Spleen (tissue), 13 donors: ENCODE measurements at regions of chr19 and their contacts with region 1.

Region 1: DNA sequence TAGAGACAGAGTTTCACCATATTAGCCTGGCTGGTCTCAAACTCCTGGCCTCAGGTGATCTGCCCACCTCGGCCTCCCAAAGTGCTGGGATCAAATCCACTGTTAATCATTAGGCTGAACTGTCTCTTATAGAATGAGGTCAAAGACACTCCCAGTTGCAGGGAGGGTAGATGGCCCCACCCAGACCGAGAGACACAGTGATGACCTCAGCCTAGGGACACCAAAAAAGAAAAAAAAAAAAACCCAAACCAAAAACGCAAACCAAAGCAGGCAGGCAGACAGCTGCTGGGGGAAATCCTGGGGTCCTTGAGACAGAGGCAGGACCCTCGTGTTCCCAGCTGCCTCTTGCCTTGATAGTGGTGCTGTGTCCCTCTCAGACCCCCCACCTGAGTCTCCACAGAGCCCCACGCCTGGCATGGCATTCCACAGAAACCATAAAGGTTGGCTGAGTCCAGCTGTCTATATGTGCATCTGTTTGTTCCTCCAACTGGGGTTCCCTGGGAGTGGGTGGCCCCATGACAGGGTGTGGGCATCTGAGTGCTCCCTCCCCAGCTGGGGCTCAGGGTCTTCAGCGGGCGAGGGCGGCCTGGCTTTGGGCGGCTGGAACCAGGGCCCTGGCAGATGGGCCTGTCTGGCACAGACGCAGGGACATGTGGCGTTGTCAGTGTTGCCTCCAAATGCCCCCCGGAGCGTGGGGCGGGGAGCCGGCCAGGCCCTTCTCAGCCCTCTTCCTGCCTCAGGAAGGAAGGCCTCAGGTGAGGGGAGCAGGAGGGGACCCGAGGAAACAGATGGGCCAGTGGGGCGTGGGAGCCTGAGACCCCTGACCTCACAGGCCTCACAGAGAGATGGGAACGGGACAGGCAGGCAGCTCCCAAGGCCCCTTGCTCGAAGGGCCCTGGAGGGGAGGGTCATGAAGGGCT is 5.2 kb downstream of the DAND5 start:
- DNase-seq: no peak
- H3K4me3 ChIP-seq: no peak overlapping the region
- H3K27ac ChIP-seq: no peak overlapping the region
- H3K4me1 ChIP-seq: peaks cover 0 to 7% (median 4%) of the 10 kb centered on the region in 6 donors
- H3K27me3 ChIP-seq: peaks cover 0 to 23% (median 8%) of the 10 kb centered on the region in 7 donors
- CTCF ChIP-seq: no peak
- POLR2A ChIP-seq: no peak

Region 2: GRCh38 chr19:12872941-12873890 is 101.3 kb before region 1 on chr19:
- intact Hi-C with region 1: no loop called
- DNase-seq: no peak
- H3K4me3 ChIP-seq: peak overlapping the region in 3 of 8 donors; percentile 24 to 40 (median 34)
- H3K27ac ChIP-seq: no peak overlapping the region
- H3K4me1 ChIP-seq: peaks cover 0 to 9% (median under 1%) of the 10 kb centered on the region in 6 donors
- H3K27me3 ChIP-seq: no peaks in the 10 kb centered on the region
- CTCF ChIP-seq: no peak
- POLR2A ChIP-seq: no peak

Region 3: GRCh38 chr19:12913011-12913561 is 61.5 kb before region 1 on chr19:
- intact Hi-C with region 1: no loop called
- DNase-seq: no peak
- H3K4me3 ChIP-seq: peak overlapping the region in 1 of 8 donors; percentile 38
- H3K27ac ChIP-seq: peak overlapping the region; percentile 42 to 86 (median 73)
- H3K4me1 ChIP-seq: peaks cover 5 to 31% (median 24%) of the 10 kb centered on the region in 6 donors
- H3K27me3 ChIP-seq: no peaks in the 10 kb centered on the region
- CTCF ChIP-seq: no peak
- POLR2A ChIP-seq: no peak

Region 4: GRCh38 chr19:12938234-12939025 is 36.1 kb before region 1 on chr19 and contains the start of gene CALR:
- intact Hi-C with region 1: no loop called
- DNase-seq: peak; percentile 99
- H3K4me3 ChIP-seq: peak within 1 kb of the TSS; percentile 56 to 100 (median 98)
- H3K27ac ChIP-seq: peak within 1 kb of the TSS; percentile 89 to 98 (median 95)
- H3K4me1 ChIP-seq: peaks cover 35 to 77% (median 68%) of the 10 kb centered on the region in 6 donors
- H3K27me3 ChIP-seq: no peaks in the 10 kb centered on the region
- CTCF ChIP-seq: peak in 5 of 11 experiments; percentile 15 to 52 (median 32)
- POLR2A ChIP-seq: peak; percentile 92 to 99 (median 97)
- total RNA-seq, gene CALR: 306 to 828 (median 571) TPM

Region 5: GRCh38 chr19:13060964-13061927 is 86.7 kb after region 1 on chr19:
- intact Hi-C with region 1: loop called (anchors 5 kb)
- DNase-seq: peak; percentile 95
- H3K4me3 ChIP-seq: peak overlapping the region; percentile 18 to 73 (median 44)
- H3K27ac ChIP-seq: peak overlapping the region in 4 of 8 donors; percentile 30 to 52 (median 42)
- H3K4me1 ChIP-seq: peaks cover 8 to 49% (median 24%) of the 10 kb centered on the region in 6 donors
- H3K27me3 ChIP-seq: peaks cover 0 to 27% (median 0%) of the 10 kb centered on the region in 7 donors
- CTCF ChIP-seq: peak; percentile 90 to 99 (median 97)
- POLR2A ChIP-seq: no peak

Region 6: GRCh38 chr19:13262450-13262849 is 287.9 kb after region 1 on chr19:
- intact Hi-C with region 1: loop called (anchors 5 kb)
- DNase-seq: no peak
- H3K4me3 ChIP-seq: no peak overlapping the region
- H3K27ac ChIP-seq: no peak overlapping the region
- H3K4me1 ChIP-seq: peaks cover 0 to 8% (median 0%) of the 10 kb centered on the region in 6 donors
- H3K27me3 ChIP-seq: peaks cover 0 to 17% (median 0%) of the 10 kb centered on the region in 7 donors
- CTCF ChIP-seq: peak; percentile 16 to 71 (median 60)
- POLR2A ChIP-seq: no peak

Region 7: GRCh38 chr19:13588957-13589833 is 614.6 kb after region 1 on chr19:
- intact Hi-C with region 1: loop called (anchors 10 kb)
- DNase-seq: peak; percentile 94
- H3K4me3 ChIP-seq: no peak overlapping the region
- H3K27ac ChIP-seq: no peak overlapping the region
- H3K4me1 ChIP-seq: peaks cover 0 to 8% (median 7%) of the 10 kb centered on the region in 6 donors
- H3K27me3 ChIP-seq: peaks cover 0 to 66% (median 7%) of the 10 kb centered on the region in 7 donors
- CTCF ChIP-seq: peak; percentile 76 to 98 (median 92)
- POLR2A ChIP-seq: no peak